Activated CD4-positive, alpha-beta T cell treated with anti-CD3 and anti-CD28 coated beads, Interleukin-2, amount 10 ng/mL, durations not matched to agents 24 days and 14 days (primary cell): ENCODE measurements at regions of chr13 and their contacts with region 1.

Region 1: DNA sequence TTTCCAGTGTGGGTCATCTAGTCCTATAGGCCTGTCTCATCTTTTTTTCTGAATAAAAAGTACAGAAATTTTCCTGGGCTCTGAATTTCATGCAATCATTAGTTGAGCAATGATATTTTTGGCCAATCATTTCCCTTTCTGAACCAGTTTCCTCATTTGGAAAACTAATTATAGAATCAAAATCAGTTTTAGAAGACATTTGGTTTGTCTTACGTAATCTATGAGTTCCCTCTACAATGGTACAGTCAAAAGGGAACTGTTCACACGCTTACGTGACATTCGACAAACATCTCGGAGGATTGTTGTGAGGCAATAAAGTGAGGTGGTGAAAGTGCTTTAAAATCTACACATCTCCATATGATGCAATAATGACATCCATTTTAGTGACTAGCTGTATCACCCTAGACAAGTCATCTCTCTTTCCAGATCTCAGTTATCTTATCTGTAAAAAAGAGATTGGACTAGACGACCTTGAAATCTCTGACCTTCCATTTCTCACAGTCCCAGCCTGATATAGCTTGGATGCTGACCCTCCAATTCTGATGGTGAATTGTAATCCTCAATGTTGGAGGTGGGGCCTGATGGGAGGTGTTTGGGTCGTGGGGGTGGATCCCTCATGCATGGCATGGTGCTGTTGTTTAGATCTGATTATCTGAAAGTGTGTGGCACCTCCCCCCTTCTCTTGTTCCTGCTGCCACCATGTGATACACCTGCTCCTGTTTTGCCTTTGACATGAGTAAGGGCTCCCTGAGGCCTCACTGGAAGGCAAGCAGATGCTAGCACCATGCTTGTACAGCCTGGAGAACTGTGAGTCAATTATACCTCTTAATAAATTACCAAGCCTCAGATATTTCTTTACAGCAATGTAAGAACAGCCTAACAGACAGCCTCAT is 26.7 kb downstream of the FLT1 start:
- DNase-seq: no peak
- H3K4me3 Mint-ChIP-seq: no peak overlapping the region
- H3K27ac Mint-ChIP-seq: no peak overlapping the region
- H3K4me1 Mint-ChIP-seq: peaks cover 8% of the 10 kb centered on the region
- H3K27me3 Mint-ChIP-seq: no peaks in the 10 kb centered on the region

Region 2: GRCh38 chr13:28991764-28992163 is 523.5 kb after region 1 on chr13:
- intact Hi-C with region 1: no loop called
- DNase-seq: no peak
- H3K4me3 Mint-ChIP-seq: no peak overlapping the region
- H3K27ac Mint-ChIP-seq: no peak overlapping the region
- H3K4me1 Mint-ChIP-seq: no peaks in the 10 kb centered on the region
- H3K27me3 Mint-ChIP-seq: no peaks in the 10 kb centered on the region

Region 3: GRCh38 chr13:29402166-29402636 is 933.9 kb after region 1 on chr13:
- intact Hi-C with region 1: loop called (anchors 10 kb)
- DNase-seq: no peak
- H3K4me3 Mint-ChIP-seq: no peak overlapping the region
- H3K27ac Mint-ChIP-seq: no peak overlapping the region
- H3K4me1 Mint-ChIP-seq: no peaks in the 10 kb centered on the region
- H3K27me3 Mint-ChIP-seq: no peaks in the 10 kb centered on the region